HepG2 (cell line): ENCODE measurements at regions of chr2 and their contacts with region 1.

Region 1: GRCh38 chr2:72325592-72326422 is 178.1 kb upstream of the CYP26B1 start:
- DNase-seq: peak; percentile 50
- ATAC-seq: peak; percentile 90
- H3K4me3 ChIP-seq: no peak overlapping the region
- H3K27ac ChIP-seq: no peak overlapping the region
- H3K4me1 ChIP-seq: no peaks in the 10 kb centered on the region
- H3K27me3 ChIP-seq: no peaks in the 10 kb centered on the region
- CTCF ChIP-seq: peak; percentile 73
- EP300 ChIP-seq: no peak
- POLR2A ChIP-seq: no peak
- RAD21 ChIP-seq: peak; percentile 47; the same call in 1 of the 2 replicates

Region 2: DNA sequence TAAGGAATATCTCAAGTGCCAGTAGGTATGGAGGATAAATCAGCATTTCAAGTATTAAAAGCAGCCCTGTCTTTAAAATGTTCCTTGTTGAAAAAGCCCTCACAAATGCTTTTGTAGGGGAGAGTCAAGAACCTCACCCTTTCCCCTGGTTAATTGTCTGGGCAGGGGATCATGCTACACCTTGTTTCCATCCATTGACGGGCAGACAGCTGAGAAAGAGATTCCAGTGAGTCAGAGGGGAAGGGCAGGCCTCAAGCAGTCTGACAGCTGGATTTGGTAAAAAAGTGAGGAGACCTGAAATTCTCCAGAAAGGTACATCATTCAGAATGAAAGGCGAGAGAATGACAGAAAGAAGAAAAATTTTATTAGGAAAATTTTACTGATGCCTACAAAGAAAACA is 25.0 kb after region 1 on chr2:
- CTCF ChIA-PET with region 1: no interaction called
- POLR2A ChIA-PET with region 1: no interaction called
- in situ Hi-C with region 1: no loop called
- intact Hi-C with region 1: loop called (anchors 1 kb)
- DNase-seq: no peak
- ATAC-seq: no peak
- H3K4me3 ChIP-seq: no peak overlapping the region
- H3K27ac ChIP-seq: no peak overlapping the region
- H3K4me1 ChIP-seq: no peaks in the 10 kb centered on the region
- H3K27me3 ChIP-seq: no peaks in the 10 kb centered on the region
- CTCF ChIP-seq: no peak
- EP300 ChIP-seq: no peak
- POLR2A ChIP-seq: no peak
- RAD21 ChIP-seq: no peak